Activated B cell treated with CpG ODN at 0.5 μM for 24 hours (primary cell): ENCODE measurements at regions of chr16 and their contacts with region 1.

Region 1: DNA sequence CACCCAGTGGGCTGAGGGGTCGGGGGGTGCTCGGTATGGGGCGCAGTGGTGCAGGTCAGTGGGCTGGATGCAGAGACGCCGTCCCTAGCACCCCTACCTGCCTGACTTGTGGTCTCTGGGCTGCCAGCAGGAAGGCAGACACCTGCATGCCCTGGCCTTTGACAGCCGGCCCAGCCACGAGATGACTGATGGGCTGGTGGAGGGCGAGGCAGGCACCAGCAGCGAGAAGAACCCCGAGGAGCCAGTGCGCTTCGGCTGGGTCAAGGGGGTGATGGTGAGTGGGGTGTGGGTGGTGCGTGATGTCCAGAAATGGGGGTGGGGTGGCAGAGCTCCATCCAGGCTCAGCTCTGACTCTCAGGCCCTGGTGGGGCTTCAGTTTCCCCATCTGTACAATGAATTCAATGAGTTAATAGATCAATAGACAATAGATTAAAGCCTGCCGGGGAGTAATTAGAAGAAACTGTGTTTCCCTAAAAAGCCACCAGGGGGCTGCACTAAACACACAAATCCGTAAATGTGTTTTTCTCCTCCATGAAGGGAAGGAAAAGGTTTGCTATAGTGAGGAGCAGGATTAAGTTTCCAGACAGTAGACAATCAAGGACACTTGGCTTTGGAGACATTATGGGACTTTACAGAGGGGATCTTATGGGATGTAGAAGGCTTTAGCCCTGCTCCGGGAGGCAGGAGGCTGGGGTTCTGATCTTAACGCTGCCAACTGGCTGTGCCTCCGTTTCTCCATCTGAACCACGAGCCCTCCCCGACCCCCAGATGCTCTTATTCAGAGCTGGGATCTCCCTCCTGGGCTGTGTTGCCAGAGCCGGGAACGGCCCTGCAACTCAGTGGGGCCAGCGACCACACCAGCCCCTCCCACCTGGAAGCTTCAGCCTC is 2.2 kb downstream of the SLC12A3 start:
- DNase-seq: no peak
- ATAC-seq: no peak
- H3K4me3 Mint-ChIP-seq: peak overlapping the region; percentile 24
- H3K27ac Mint-ChIP-seq: peak overlapping the region; percentile 69
- H3K4me1 Mint-ChIP-seq: peaks cover 46% of the 10 kb centered on the region
- H3K27me3 Mint-ChIP-seq: no peaks in the 10 kb centered on the region
- CTCF ChIP-seq: no peak

Region 2: DNA sequence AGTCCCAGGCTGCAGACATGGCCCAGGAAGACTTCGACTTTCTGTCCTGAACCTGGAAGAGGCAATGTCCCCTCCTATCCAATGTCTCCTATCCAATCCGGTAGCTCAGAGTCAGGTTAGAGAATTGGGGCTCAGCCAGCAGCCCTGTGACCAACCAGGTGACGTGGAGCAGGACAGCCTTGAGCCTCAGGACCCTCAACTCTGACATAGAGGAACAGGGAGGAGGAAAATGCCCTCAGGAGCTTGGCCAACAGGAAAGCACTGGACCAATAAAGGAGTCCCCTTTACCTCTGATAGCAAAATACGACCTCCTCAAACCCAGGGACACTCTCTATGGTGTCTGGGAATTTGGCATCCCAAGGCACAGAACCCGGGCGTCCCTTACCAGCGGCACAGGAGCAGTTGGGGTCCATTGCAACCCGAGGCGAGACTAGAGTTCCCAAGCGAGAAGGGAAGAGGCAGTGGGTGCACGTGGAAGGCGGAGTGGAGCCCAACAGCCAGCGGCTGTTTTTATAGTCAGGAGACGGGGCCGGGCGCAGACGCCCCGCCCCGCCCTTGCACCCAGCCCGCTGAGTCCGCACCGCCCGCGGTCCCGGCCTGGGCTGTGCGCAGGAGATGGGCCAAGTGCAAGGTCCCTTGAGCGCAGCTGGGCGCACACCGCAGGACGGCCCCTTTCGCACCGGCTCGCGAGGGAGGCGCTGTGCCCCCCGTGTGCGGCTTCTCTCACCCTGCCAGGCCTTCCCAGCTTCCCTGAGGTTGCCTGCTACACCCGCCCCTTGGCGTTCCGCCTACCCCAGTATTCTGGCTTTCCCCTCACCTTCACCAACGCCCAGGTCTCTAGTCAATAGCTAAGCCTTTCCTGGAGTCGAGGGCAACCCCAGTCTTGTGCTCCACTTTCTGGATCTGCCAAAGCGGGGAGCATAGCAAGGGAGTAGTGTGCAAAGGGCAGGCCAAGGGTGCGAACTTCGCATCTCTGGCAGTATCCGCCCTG is 199.3 kb before region 1 on chr16 and contains the start of gene MT1G:
- CTCF ChIA-PET with region 1: no interaction called
- POLR2A ChIA-PET with region 1: no interaction called
- intact Hi-C with region 1: no loop called
- DNase-seq: no peak
- ATAC-seq: no peak
- H3K4me3 Mint-ChIP-seq: no peak within 1 kb of the TSS
- H3K27ac Mint-ChIP-seq: no peak within 1 kb of the TSS
- H3K4me1 Mint-ChIP-seq: peaks cover 6% of the 10 kb centered on the region
- H3K27me3 Mint-ChIP-seq: peaks cover 77% of the 10 kb centered on the region
- CTCF ChIP-seq: no peak
- total RNA-seq, gene MT1G: 0.69 TPM in 1 of 2 replicates, not detected in the other

Region 3: DNA sequence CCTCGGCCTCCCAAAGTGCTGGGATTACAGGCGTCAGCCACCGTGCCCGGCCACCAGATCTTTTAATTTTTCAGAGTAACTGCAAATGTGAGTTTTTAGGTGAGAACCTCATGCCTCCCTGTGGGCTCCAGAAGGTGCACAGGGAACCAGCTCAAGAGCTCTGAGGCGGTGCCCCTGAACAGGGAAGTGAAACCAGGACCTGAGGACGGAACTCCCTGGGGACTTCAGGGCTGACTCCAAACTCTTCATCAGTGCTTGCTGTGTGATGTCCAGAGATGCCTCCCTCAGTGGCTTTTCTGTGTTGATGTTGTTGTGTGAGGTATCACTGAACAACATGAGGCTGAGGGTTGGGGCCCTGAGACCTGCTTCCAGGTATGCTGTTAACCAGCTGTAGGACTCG is 21.6 kb after region 1 on chr16:
- CTCF ChIA-PET with region 1: interaction called, 9 read pairs
- POLR2A ChIA-PET with region 1: interaction called, 5 read pairs
- intact Hi-C with region 1: loop called (anchors 1 kb)
- DNase-seq: peak; percentile 55
- ATAC-seq: peak; percentile 91
- H3K4me3 Mint-ChIP-seq: peak overlapping the region; percentile 24
- H3K27ac Mint-ChIP-seq: peak overlapping the region; percentile 68
- H3K4me1 Mint-ChIP-seq: peaks cover 16% of the 10 kb centered on the region
- H3K27me3 Mint-ChIP-seq: no peaks in the 10 kb centered on the region
- CTCF ChIP-seq: no peak

Region 4: GRCh38 chr16:56911771-56912571 is 44.8 kb after region 1 on chr16:
- CTCF ChIA-PET with region 1: interaction called, 5 read pairs
- POLR2A ChIA-PET with region 1: interaction called, 34 read pairs
- intact Hi-C with region 1: loop called (anchors 2 kb)
- DNase-seq: peak; percentile 70
- ATAC-seq: peak; percentile 81
- H3K4me3 Mint-ChIP-seq: peak overlapping the region; percentile 64
- H3K27ac Mint-ChIP-seq: peak overlapping the region; percentile 96
- H3K4me1 Mint-ChIP-seq: peaks cover 79% of the 10 kb centered on the region
- H3K27me3 Mint-ChIP-seq: no peaks in the 10 kb centered on the region
- CTCF ChIP-seq: no peak

Region 5: DNA sequence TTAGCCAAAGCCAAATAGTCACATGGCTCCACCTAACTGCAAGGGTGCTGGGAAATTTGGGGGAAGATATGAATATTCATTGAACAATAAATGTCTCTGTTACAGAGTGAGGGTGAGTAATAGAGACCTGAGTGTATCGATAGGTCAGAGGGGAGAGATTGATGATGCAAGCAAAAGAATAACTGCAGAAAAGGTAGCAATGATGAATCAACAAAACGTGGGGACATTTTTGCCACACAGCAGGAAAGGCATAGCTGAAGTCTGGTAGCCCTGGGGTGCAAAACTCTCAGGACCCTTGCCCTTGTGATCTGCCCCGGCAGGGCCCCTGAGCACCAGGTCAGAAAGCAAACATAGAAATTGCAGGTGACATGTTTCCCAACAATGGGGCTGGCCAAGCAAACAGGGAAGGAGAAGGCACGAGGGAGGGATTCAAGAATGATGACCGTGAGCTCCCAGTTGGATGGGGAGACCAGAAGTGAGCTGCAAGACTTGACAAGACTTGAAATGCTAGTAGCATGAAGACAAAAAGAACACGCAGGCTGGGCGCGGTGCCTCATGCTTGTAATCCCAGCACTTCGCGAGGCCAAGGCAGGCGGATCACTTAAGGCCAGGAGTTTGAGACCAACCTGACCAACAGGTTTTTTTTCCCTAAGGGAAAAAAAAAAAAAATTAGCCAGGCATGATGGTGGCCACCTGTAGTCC is 52.1 kb after region 1 on chr16:
- CTCF ChIA-PET with region 1: interaction called, 7 read pairs
- POLR2A ChIA-PET with region 1: interaction called, 15 read pairs
- intact Hi-C with region 1: loop called (anchors 2 kb)
- DNase-seq: no peak
- ATAC-seq: peak; percentile 16
- H3K4me3 Mint-ChIP-seq: peak overlapping the region; percentile 61
- H3K27ac Mint-ChIP-seq: peak overlapping the region; percentile 96
- H3K4me1 Mint-ChIP-seq: peaks cover 77% of the 10 kb centered on the region
- H3K27me3 Mint-ChIP-seq: no peaks in the 10 kb centered on the region
- CTCF ChIP-seq: no peak

Region 6: GRCh38 chr16:56938422-56939156 is 71.4 kb after region 1 on chr16:
- CTCF ChIA-PET with region 1: interaction called, 57 read pairs
- POLR2A ChIA-PET with region 1: interaction called, 444 read pairs
- intact Hi-C with region 1: loop called (anchors 1 kb)
- DNase-seq: no peak
- ATAC-seq: no peak
- H3K4me3 Mint-ChIP-seq: peak overlapping the region; percentile 81
- H3K27ac Mint-ChIP-seq: peak overlapping the region; percentile 83
- H3K4me1 Mint-ChIP-seq: peaks cover 87% of the 10 kb centered on the region
- H3K27me3 Mint-ChIP-seq: no peaks in the 10 kb centered on the region
- CTCF ChIP-seq: no peak

Region 7: GRCh38 chr16:56944954-56945839 is 78.0 kb after region 1 on chr16:
- CTCF ChIA-PET with region 1: interaction called, 57 read pairs
- POLR2A ChIA-PET with region 1: interaction called, 444 read pairs
- intact Hi-C with region 1: no loop called
- DNase-seq: no peak
- ATAC-seq: no peak
- H3K4me3 Mint-ChIP-seq: no peak overlapping the region
- H3K27ac Mint-ChIP-seq: peak overlapping the region; percentile 71
- H3K4me1 Mint-ChIP-seq: peaks cover 69% of the 10 kb centered on the region
- H3K27me3 Mint-ChIP-seq: no peaks in the 10 kb centered on the region
- CTCF ChIP-seq: no peak

Region 8: GRCh38 chr16:56950881-56951771 is 83.9 kb after region 1 on chr16:
- CTCF ChIA-PET with region 1: interaction called, 57 read pairs
- POLR2A ChIA-PET with region 1: interaction called, 444 read pairs
- intact Hi-C with region 1: loop called (anchors 1 kb)
- DNase-seq: peak; percentile 68
- ATAC-seq: peak; percentile 90
- H3K4me3 Mint-ChIP-seq: peak overlapping the region; percentile 60
- H3K27ac Mint-ChIP-seq: peak overlapping the region; percentile 74
- H3K4me1 Mint-ChIP-seq: peaks cover 48% of the 10 kb centered on the region
- H3K27me3 Mint-ChIP-seq: no peaks in the 10 kb centered on the region
- CTCF ChIP-seq: no peak

Region 9: GRCh38 chr16:57757326-57757786 is 890.2 kb after region 1 on chr16:
- CTCF ChIA-PET with region 1: no interaction called
- POLR2A ChIA-PET with region 1: no interaction called
- intact Hi-C with region 1: no loop called
- DNase-seq: peak; percentile 78
- ATAC-seq: peak; percentile 99
- H3K4me3 Mint-ChIP-seq: no peak overlapping the region
- H3K27ac Mint-ChIP-seq: no peak overlapping the region
- H3K4me1 Mint-ChIP-seq: no peaks in the 10 kb centered on the region
- H3K27me3 Mint-ChIP-seq: no peaks in the 10 kb centered on the region
- CTCF ChIP-seq: no peak